Mucosa of descending colon (tissue), 3 donors: ENCODE measurements at regions of chr13 and their contacts with region 1.

Region 1: DNA sequence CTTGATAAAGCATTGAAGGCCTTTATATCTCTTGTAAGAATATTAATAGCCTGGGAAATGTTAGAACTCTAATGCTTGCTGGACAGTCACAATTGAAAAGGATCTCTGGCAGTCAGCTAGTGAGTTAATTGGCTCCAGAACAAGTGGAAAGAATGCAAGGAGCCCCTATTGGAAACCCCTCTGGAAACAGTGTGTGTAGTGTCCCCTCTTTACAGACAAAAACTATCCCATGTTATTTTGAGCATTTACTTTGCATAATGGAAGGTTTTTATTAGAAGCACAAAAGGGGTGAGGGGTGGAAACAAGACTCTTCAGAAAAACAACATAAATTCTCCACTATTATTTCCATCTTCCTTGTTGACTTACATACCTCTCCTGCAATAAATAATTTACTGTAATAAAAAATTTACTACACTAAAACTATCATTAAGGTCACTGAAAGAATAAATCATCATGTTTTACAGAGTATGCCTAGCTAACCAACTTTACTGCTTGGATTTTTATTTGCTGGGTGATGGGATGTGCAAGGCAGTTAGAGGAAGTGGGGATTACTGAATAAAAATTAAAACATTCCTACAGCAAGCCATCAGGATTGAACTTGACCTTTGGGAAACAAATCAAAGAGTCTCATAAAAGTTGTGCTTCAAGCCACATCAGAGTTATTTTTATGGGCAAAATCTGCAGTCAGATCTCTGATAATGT is 610.4 kb downstream of the TBC1D4 start:
- DNase-seq: no peak
- ATAC-seq: no peak
- H3K4me3 ChIP-seq: no peak overlapping the region
- H3K4me1 ChIP-seq: no peaks in the 10 kb centered on the region
- CTCF ChIP-seq: no peak

Region 2: GRCh38 chr13:74560325-74560724 is 311.2 kb before region 1 on chr13:
- intact Hi-C with region 1: no loop called
- DNase-seq: no peak
- ATAC-seq: no peak
- H3K4me3 ChIP-seq: no peak overlapping the region
- H3K4me1 ChIP-seq: no peaks in the 10 kb centered on the region
- CTCF ChIP-seq: no peak

Region 3: DNA sequence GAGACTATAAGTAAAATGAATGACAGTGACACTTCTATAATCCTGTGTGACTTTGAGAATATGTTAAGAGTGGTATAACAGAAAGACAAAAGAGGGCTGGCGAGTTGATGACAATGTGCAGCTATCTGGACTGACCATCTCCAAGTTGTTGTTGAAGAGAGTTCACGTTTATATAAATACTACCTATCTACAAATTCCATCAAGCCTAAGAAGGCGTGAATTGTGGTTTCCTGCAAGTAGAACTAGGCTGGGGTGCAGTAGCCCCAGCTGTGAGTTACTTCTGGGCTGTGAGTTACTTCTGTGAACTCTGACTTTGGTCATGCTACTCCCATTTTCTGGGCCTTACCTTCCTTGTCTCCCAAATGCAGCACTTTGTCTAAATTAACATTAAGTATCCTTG is 49.4 kb after region 1 on chr13:
- intact Hi-C with region 1: loop called in 1 of 2 experiments (anchors 10 kb)
- DNase-seq: no peak
- ATAC-seq: no peak
- H3K4me3 ChIP-seq: no peak overlapping the region
- H3K4me1 ChIP-seq: no peaks in the 10 kb centered on the region
- CTCF ChIP-seq: no peak